Prostate gland (tissue), 2 donors: ENCODE measurements at regions of chr13 and their contacts with region 1.

Region 1: DNA sequence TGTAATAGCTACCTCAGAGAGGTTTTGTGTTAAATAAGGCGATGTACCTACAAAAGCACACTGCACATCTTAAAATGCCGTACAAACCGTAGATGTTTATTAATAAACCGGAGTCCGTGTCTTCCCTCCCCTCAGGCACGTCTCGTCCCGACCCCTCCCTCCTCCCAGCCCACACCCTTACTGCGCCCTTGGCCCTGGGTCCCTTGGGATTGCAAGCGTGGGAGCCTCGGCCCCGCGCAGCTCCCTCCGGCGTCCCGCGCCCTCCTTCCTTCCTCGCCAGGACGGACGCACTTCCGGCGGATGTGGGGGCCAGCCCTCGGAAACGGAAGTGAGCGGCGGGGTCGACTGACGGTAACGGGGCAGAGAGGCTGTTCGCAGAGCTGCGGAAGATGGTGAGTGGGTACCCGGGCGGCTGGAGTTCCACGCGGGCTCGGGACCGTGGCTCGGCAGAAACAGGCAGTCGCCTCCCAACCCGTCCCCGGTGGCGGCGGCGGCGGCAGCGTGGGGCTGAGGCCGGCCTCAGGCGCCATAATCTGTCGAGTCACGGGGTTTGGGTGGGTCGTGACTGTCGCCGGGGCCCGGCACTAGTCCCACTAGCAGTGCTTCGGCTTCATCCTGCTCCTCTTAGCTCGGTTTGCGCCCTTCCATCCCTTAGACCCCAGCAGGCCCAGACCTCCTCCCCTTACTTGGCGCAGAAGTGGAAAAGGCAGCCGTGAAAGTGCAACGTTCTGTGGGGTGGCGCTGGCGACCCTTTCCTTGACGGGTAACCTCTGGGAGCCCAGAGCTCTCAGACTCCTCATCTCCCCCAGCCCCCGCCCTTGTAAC is at the start of gene POMP:
- DNase-seq: peak; percentile 85
- H3K4me3 ChIP-seq: peak within 1 kb of the TSS; percentile 87 to 90
- H3K27ac ChIP-seq: peak within 1 kb of the TSS; percentile 82 to 88
- H3K4me1 ChIP-seq: no peaks in the 10 kb centered on the region
- H3K27me3 ChIP-seq: no peaks in the 10 kb centered on the region
- CTCF ChIP-seq: peak in 1 of 4 experiments; percentile 6
- POLR2A ChIP-seq: peak; percentile 90
- total RNA-seq, gene POMP: 26.3 to 35.9 TPM

Region 2: GRCh38 chr13:28138012-28138755 is 520.8 kb before region 1 on chr13 and contains the start of gene PAN3:
- intact Hi-C with region 1: loop called (anchors 10 kb)
- DNase-seq: peak; percentile 86
- H3K4me3 ChIP-seq: peak within 1 kb of the TSS; percentile 82 to 100
- H3K27ac ChIP-seq: peak within 1 kb of the TSS; percentile 96 to 98
- H3K4me1 ChIP-seq: peaks cover 5% of the 10 kb centered on the region
- H3K27me3 ChIP-seq: no peaks in the 10 kb centered on the region
- CTCF ChIP-seq: peak in 1 of 4 experiments; percentile 24
- POLR2A ChIP-seq: peak; percentile 46
- total RNA-seq, gene PAN3: 31.4 to 51.7 TPM

Region 3: GRCh38 chr13:28718543-28719226 is 59.7 kb after region 1 on chr13 and contains the start of gene SLC46A3:
- intact Hi-C with region 1: loop called (anchors 5 kb)
- DNase-seq: peak; percentile 84
- H3K4me3 ChIP-seq: peak within 1 kb of the TSS; percentile 37 to 48
- H3K27ac ChIP-seq: peak within 1 kb of the TSS; percentile 73 to 74
- H3K4me1 ChIP-seq: no peaks in the 10 kb centered on the region
- H3K27me3 ChIP-seq: no peaks in the 10 kb centered on the region
- CTCF ChIP-seq: no peak
- POLR2A ChIP-seq: peak; percentile 23
- total RNA-seq, gene SLC46A3: 8.2 to 16.8 TPM

Region 4: DNA sequence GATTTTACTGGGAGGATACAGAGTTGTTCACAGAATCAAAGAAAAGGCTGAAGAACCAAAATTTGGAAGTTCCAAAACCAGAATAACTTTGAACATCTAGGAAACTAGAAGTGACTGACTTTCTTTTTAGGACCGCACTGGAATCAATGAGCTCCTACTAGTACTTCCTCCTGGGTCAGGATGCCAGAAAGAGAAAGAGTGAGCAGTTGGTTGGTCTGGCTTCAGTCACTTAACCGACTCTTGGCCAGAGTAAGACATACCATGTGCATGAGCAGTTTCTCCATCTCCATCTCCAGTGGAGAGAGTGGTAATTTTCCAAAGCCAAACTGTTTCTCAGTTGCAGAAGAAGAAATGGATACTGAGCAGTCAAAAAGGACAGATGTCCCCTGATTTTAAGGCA is 134.0 kb after region 1 on chr13:
- intact Hi-C with region 1: no loop called
- DNase-seq: no peak
- H3K4me3 ChIP-seq: no peak overlapping the region
- H3K27ac ChIP-seq: no peak overlapping the region
- H3K4me1 ChIP-seq: no peaks in the 10 kb centered on the region
- H3K27me3 ChIP-seq: no peaks in the 10 kb centered on the region
- CTCF ChIP-seq: no peak
- POLR2A ChIP-seq: no peak

Region 5: GRCh38 chr13:28885181-28885580 is 226.2 kb after region 1 on chr13:
- intact Hi-C with region 1: no loop called
- DNase-seq: no peak
- H3K4me3 ChIP-seq: no peak overlapping the region
- H3K27ac ChIP-seq: no peak overlapping the region
- H3K4me1 ChIP-seq: no peaks in the 10 kb centered on the region
- H3K27me3 ChIP-seq: no peaks in the 10 kb centered on the region
- CTCF ChIP-seq: no peak
- POLR2A ChIP-seq: no peak